Activated naive CD4-positive, alpha-beta T cell treated with anti-CD3 and anti-CD28 coated beads for 36 hours (primary cell): ENCODE measurements at regions of chr13 and their contacts with region 1.

Region 1: GRCh38 chr13:111153279-111153976 is 38.3 kb downstream of the ARHGEF7 start:
- DNase-seq: peak; percentile 93
- H3K4me3 Mint-ChIP-seq: peak overlapping the region; percentile 90
- H3K27ac Mint-ChIP-seq: peak overlapping the region; percentile 90
- H3K4me1 Mint-ChIP-seq: peaks cover 31% of the 10 kb centered on the region
- H3K27me3 Mint-ChIP-seq: no peaks in the 10 kb centered on the region

Region 2: DNA sequence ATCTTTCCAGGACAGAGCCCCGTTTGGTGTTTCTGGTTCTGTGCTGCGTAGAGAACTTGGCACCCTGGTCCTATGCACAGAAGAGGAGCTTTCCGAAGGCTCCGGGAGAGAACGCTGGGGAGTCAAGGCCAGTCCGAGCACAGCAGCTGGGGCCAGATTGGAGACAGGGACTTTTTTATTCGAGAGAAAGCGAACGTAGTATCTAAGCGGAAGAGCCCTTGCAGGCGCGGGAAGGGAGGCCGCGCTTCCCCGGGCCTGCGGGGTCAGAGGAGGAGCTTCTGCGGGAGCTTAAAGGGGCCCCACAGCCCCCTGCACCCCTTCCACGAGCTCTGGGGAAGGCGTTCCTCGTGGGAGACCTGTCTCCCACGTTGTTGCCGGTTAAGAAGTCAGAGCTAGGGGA is 86.9 kb before region 1 on chr13:
- CTCF ChIA-PET with region 1: interaction called, 17 read pairs
- intact Hi-C with region 1: no loop called
- DNase-seq: no peak
- H3K4me3 Mint-ChIP-seq: peak overlapping the region; percentile 44
- H3K27ac Mint-ChIP-seq: no peak overlapping the region
- H3K4me1 Mint-ChIP-seq: peaks cover 4% of the 10 kb centered on the region
- H3K27me3 Mint-ChIP-seq: peaks cover 43% of the 10 kb centered on the region

Region 3: DNA sequence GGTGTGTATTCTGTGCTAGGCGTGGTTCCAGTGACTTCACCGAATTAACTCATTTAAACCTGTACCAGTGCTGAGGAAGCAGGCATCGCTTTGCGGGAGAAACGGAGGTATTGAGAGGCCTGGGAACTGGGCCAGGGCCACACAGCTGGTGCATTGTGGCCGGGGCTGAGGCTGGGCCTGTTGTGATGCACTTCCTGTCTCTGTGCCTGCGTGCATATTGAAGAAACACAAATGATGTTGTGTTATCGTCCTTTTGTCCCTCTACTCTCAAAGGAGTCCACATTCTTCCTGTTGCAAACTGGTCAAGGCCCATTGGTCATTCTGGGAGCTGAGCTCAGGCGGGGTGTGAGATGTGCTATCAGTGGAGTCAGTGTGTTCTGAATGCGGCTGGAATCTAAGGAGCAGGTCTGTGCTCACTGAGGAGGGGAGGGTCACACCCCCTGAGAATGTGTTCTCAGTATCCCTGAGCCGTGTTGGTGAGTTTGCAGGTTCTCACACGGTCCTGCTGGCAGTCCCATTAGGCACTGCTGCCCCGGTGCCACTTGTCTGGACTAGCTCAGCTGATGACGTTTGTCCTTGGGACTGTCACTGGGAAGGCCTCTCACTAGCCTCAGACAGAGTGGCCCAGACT is 23.8 kb after region 1 on chr13:
- CTCF ChIA-PET with region 1: interaction called, 3 read pairs
- intact Hi-C with region 1: loop called (anchors 2 kb)
- DNase-seq: peak; percentile 68
- H3K4me3 Mint-ChIP-seq: no peak overlapping the region
- H3K27ac Mint-ChIP-seq: peak overlapping the region; percentile 91
- H3K4me1 Mint-ChIP-seq: peaks cover 78% of the 10 kb centered on the region
- H3K27me3 Mint-ChIP-seq: no peaks in the 10 kb centered on the region

Region 4: DNA sequence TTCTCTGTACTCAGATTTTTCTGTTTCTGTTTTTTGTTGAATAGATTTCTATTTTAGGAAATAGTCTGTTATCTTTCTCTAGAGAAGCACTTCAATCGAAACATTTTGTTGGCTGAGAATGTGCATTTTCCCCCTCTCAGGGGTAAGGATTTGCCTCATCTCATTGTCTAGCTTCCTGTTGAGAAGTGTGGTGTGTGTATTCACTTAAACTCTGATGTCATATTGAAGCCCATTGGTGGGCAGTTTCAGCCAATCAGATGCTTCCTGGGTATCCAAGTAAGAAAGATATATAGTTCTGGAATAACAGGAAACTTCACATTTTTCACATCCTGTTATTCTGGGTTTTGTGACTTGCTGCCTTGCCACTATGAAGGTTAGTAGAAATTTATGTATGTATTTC is 49.3 kb after region 1 on chr13:
- CTCF ChIA-PET with region 1: no interaction called
- intact Hi-C with region 1: loop called (anchors 1 kb)
- DNase-seq: peak; percentile 51
- H3K4me3 Mint-ChIP-seq: no peak overlapping the region
- H3K27ac Mint-ChIP-seq: peak overlapping the region; percentile 50
- H3K4me1 Mint-ChIP-seq: peaks cover 54% of the 10 kb centered on the region
- H3K27me3 Mint-ChIP-seq: no peaks in the 10 kb centered on the region

Region 5: DNA sequence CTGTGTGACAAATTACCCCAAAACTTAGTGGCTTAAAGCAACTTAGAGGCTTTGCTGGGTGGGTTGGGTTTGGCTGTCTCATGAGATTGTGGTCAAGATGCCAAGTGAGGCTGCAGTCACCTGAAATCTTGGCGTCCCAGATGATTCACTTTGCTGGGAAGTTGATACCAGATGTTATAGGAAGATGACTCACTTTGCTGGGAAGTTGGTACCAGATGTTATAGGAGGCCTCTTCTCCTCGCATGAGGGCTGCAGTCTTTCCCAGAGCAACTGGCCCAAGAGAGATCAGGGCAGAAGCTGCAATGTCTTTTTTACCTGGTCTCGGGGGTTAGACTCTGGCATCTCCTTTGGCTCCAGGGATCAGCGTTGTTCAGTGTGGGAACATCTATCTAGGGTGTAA is 183.8 kb after region 1 on chr13:
- CTCF ChIA-PET with region 1: no interaction called
- intact Hi-C with region 1: no loop called
- DNase-seq: no peak
- H3K4me3 Mint-ChIP-seq: no peak overlapping the region
- H3K27ac Mint-ChIP-seq: no peak overlapping the region
- H3K4me1 Mint-ChIP-seq: peaks cover 2% of the 10 kb centered on the region
- H3K27me3 Mint-ChIP-seq: no peaks in the 10 kb centered on the region

Region 6: DNA sequence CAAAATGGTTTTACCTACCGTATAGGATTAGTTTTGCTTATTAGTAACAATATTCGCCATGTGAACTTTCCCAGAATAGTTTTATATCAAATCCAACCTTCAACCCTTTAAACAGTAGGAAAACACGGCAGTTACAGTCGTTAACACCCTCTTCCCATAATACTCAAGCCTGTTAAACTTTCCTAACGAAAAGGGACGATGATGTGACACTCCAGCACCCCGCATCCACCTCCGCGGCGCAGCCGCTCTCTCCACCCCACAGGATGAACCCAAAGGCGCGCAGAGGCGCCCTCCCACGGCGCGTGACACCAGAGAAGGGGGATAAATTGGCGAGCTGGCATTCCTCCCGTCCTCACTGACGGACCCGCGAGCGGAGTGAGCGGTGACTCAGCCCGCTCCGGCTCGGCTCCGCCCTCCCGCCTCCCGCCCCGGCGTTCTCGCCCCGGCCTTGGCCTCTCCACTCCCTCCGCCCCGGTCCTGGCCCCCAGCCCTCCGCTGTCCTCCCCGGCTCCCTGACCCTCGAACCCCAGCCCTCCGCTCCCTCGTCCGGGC is 1433.9 kb after region 1 on chr13:
- CTCF ChIA-PET with region 1: no interaction called
- intact Hi-C with region 1: loop called (anchors 10 kb)
- DNase-seq: peak; percentile 78
- H3K4me3 Mint-ChIP-seq: peak overlapping the region; percentile 96
- H3K27ac Mint-ChIP-seq: peak overlapping the region; percentile 93
- H3K4me1 Mint-ChIP-seq: peaks cover 47% of the 10 kb centered on the region
- H3K27me3 Mint-ChIP-seq: no peaks in the 10 kb centered on the region